Activated CD4-positive, alpha-beta memory T cell treated with anti-CD3 and anti-CD28 coated beads for 36 hours (primary cell): ENCODE measurements at regions of chr12 and their contacts with region 1.

Region 1: GRCh38 chr12:121015825-121016766 is at the start of gene C12orf43:
- DNase-seq: peak; percentile 96
- H3K4me3 Mint-ChIP-seq: peak within 1 kb of the TSS; percentile 98
- H3K27ac Mint-ChIP-seq: peak within 1 kb of the TSS; percentile 88
- H3K4me1 Mint-ChIP-seq: peaks cover 16% of the 10 kb centered on the region
- H3K27me3 Mint-ChIP-seq: no peaks in the 10 kb centered on the region
- total RNA-seq, gene C12orf43: 19.4 to 19.6 TPM

Region 2: GRCh38 chr12:121033625-121034349 is 17.7 kb after region 1 on chr12:
- CTCF ChIA-PET with region 1: interaction called, 3 read pairs
- POLR2A ChIA-PET with region 1: no interaction called
- intact Hi-C with region 1: loop called (anchors 1 kb)
- DNase-seq: peak; percentile 80
- H3K4me3 Mint-ChIP-seq: peak overlapping the region; percentile 10
- H3K27ac Mint-ChIP-seq: peak overlapping the region; percentile 72
- H3K4me1 Mint-ChIP-seq: peaks cover 58% of the 10 kb centered on the region
- H3K27me3 Mint-ChIP-seq: no peaks in the 10 kb centered on the region

Region 3: GRCh38 chr12:121038861-121039666 is 23.0 kb after region 1 on chr12 and contains the start of gene OASL:
- CTCF ChIA-PET with region 1: interaction called, 3 read pairs
- POLR2A ChIA-PET with region 1: no interaction called
- intact Hi-C with region 1: loop called (anchors 1 kb)
- DNase-seq: peak; percentile 75
- H3K4me3 Mint-ChIP-seq: peak within 1 kb of the TSS; percentile 85
- H3K27ac Mint-ChIP-seq: peak within 1 kb of the TSS; percentile 84
- H3K4me1 Mint-ChIP-seq: peaks cover 50% of the 10 kb centered on the region
- H3K27me3 Mint-ChIP-seq: peaks cover 9% of the 10 kb centered on the region
- total RNA-seq, gene OASL: 21.9 to 26.5 TPM

Region 4: DNA sequence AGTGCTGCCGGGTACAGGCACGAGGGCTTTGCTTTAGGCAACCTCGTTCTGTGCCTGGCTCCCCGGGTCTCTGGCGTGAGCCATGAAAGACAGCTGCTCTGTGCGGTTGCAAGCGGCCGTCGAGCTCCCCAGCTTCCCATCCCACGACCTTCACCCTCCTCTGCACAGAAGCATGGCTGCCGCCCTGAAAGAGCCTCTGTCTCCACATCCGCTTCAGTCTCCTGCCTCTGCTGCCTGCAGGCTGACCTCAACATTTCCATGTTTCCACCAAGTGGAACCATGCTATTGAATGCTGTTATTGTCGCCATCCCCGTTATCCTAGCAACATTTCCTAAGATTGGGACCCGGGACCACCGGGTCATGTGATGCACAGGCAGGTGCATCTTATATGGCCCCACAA is 507.6 kb after region 1 on chr12:
- CTCF ChIA-PET with region 1: no interaction called
- POLR2A ChIA-PET with region 1: no interaction called
- intact Hi-C with region 1: no loop called
- DNase-seq: no peak
- H3K4me3 Mint-ChIP-seq: no peak overlapping the region
- H3K27ac Mint-ChIP-seq: no peak overlapping the region
- H3K4me1 Mint-ChIP-seq: peaks cover 9% of the 10 kb centered on the region
- H3K27me3 Mint-ChIP-seq: no peaks in the 10 kb centered on the region